Mammary epithelial cell (primary cell): ENCODE measurements at regions of chr16 and their contacts with region 1.

Region 1: GRCh38 chr16:24198807-24199533 is 57.2 kb upstream of the CACNG3 start:
- DNase-seq: no peak
- H3K4me3 ChIP-seq: no peak overlapping the region
- H3K27ac ChIP-seq: no peak overlapping the region
- H3K4me1 ChIP-seq: no peaks in the 10 kb centered on the region
- H3K27me3 ChIP-seq: no peaks in the 10 kb centered on the region
- CTCF ChIP-seq: no peak

Region 2: DNA sequence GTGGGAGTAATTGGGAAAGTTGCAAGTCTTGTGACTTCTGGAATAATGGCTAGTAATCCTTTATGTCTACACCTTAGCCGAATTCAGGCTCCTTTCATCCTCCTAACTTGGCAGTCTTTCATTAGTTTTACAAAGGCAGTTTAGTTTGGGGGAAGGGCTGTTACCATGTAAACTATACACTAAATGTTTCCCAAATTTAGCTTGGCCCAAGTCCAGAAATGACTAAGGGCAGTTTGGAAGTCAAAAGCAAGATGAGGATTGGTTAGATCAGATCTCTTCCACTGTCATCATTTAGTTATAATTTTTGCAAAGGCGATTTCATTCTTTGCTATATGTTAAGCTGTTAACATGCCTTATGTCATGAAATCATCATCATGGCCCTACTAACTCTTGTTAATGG is 58.2 kb before region 1 on chr16:
- CTCF ChIA-PET with region 1: no interaction called
- dilution Hi-C with region 1: loop called (anchors 5 kb)
- in situ Hi-C with region 1: no loop called
- intact Hi-C with region 1: no loop called
- DNase-seq: no peak
- H3K4me3 ChIP-seq: no peak overlapping the region
- H3K27ac ChIP-seq: no peak overlapping the region
- H3K4me1 ChIP-seq: no peaks in the 10 kb centered on the region
- H3K27me3 ChIP-seq: no peaks in the 10 kb centered on the region
- CTCF ChIP-seq: no peak

Region 3: DNA sequence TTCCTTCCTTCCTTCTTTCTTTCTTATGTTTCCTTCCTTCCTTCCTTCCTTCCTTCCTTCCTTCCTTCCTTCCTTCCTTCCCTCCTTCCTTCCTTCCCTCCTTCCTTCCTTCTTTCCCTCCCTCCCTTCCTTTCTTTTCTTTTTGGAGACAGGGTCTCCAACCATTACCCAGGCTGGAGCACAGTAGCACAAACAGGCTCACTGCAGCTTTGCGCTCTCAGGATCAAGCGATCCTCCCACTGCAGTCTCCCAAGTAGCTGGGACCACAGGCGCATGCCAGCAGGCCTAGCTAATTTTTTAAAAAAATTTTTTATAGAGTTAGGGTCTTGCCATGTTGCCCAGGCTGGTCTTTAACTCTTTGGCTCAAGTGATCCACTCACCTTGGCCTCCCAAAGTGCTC is 1090.5 kb after region 1 on chr16:
- CTCF ChIA-PET with region 1: no interaction called
- dilution Hi-C with region 1: no loop called
- in situ Hi-C with region 1: no loop called
- intact Hi-C with region 1: no loop called
- DNase-seq: no peak
- H3K4me3 ChIP-seq: no peak overlapping the region
- H3K27ac ChIP-seq: no peak overlapping the region
- H3K4me1 ChIP-seq: no peaks in the 10 kb centered on the region
- H3K27me3 ChIP-seq: no peaks in the 10 kb centered on the region
- CTCF ChIP-seq: no peak